CD4-positive, alpha-beta T cell (primary cell): ENCODE measurements at regions of chr6 and their contacts with region 1.

Region 1: GRCh38 chr6:111873178-111874024 is at the start of gene FYN:
- DNase-seq: peak; percentile 97 to 99 (median 98)
- ATAC-seq: peak; percentile 86
- H3K4me3 ChIP-seq: peak within 1 kb of the TSS; percentile 86
- H3K4me3 Mint-ChIP-seq: peak within 1 kb of the TSS; percentile 97
- H3K27ac ChIP-seq: peak within 1 kb of the TSS; percentile 87 to 94
- H3K27ac Mint-ChIP-seq: peak within 1 kb of the TSS; percentile 93
- H3K4me1 ChIP-seq: peaks cover 22% of the 10 kb centered on the region
- H3K4me1 Mint-ChIP-seq: peaks cover 54% of the 10 kb centered on the region
- H3K27me3 ChIP-seq: no peaks in the 10 kb centered on the region
- H3K27me3 Mint-ChIP-seq: no peaks in the 10 kb centered on the region
- CTCF ChIP-seq: no peak
- total RNA-seq, gene FYN: 419 TPM

Region 2: DNA sequence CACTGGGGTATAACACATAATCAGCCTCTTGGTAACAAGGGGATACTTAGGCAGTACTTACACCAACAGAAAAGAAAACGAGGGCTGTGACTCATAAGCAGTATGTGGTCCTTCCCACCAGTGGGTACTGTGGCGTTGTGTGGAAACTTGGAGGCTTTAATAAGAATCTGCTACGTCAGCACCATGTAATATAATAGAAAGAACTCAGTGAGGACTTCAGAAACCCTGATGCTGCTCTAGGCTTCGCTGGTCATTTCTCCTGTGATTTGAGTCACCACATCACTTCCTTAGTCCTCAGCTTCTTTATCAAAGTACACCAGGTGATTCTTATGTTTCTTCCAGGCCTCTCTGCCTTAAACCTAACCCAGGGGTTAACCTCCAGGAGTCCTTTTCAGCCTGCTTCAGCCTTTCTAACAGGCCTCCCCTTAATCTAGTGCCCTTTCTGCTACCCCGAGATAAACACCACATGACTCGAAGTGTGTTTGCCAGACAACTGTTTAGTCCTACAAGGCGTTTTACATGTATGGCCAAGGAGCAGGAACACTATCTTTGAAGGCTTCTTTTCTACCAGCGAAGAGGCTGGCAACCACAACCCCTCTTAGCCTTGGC is 68.7 kb before region 1 on chr6:
- CTCF ChIA-PET with region 1: interaction called, 3 read pairs
- POLR2A ChIA-PET with region 1: interaction called, 7 read pairs
- intact Hi-C with region 1: loop called in 1 of 2 experiments (anchors 1 kb)
- DNase-seq: peak; percentile 38 to 91 (median 54)
- ATAC-seq: peak; percentile 71
- H3K4me3 ChIP-seq: peak overlapping the region; percentile 15
- H3K4me3 Mint-ChIP-seq: peak overlapping the region; percentile 67
- H3K27ac ChIP-seq: peak overlapping the region; percentile 55 to 66
- H3K27ac Mint-ChIP-seq: peak overlapping the region; percentile 91
- H3K4me1 ChIP-seq: peaks cover 77% of the 10 kb centered on the region
- H3K4me1 Mint-ChIP-seq: peaks cover 93% of the 10 kb centered on the region
- H3K27me3 ChIP-seq: no peaks in the 10 kb centered on the region
- H3K27me3 Mint-ChIP-seq: no peaks in the 10 kb centered on the region
- CTCF ChIP-seq: no peak

Region 3: GRCh38 chr6:111850295-111850937 is 23.0 kb before region 1 on chr6:
- CTCF ChIA-PET with region 1: interaction called, 9 read pairs
- POLR2A ChIA-PET with region 1: interaction called, 6 read pairs
- intact Hi-C with region 1: loop called in 1 of 2 experiments (anchors 2 kb)
- DNase-seq: peak in 3 of 14 experiments; percentile 63 to 67 (median 63)
- ATAC-seq: peak; percentile 51
- H3K4me3 ChIP-seq: no peak overlapping the region
- H3K4me3 Mint-ChIP-seq: peak overlapping the region; percentile 78
- H3K27ac ChIP-seq: peak overlapping the region in 1 of 2 donors; percentile 50
- H3K27ac Mint-ChIP-seq: no peak overlapping the region
- H3K4me1 ChIP-seq: peaks cover 72% of the 10 kb centered on the region
- H3K4me1 Mint-ChIP-seq: peaks cover 66% of the 10 kb centered on the region
- H3K27me3 ChIP-seq: no peaks in the 10 kb centered on the region
- H3K27me3 Mint-ChIP-seq: no peaks in the 10 kb centered on the region
- CTCF ChIP-seq: no peak

Region 4: DNA sequence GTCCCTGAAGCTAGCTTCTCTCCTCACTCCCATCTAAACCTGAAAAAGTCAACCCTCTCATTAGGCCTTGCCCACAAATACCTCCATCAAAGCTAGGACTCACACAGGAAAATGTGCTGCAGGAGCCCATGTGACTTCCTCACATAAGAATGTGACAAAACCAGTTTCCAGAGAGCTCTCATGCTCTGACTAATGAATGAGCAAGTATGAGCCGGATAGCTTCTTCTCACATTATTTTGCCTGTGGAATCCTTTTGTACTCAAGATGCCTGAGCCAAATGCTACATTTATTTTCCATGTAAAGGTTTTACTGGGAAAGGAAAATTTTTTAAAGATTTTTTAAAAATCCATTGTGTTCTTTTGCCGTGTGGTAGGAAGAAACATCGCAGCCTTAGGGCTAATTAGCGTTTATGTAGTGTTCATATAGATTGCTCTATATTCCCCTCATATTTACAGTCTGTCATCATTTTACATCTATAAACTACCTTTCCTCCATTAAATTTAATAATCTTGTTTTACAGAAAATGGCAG is 111.9 kb after region 1 on chr6:
- CTCF ChIA-PET with region 1: interaction called, 5 read pairs
- POLR2A ChIA-PET with region 1: interaction called, 14 read pairs
- intact Hi-C with region 1: loop called in 1 of 2 experiments (anchors 1 kb)
- DNase-seq: peak in 7 of 14 experiments; percentile 15 to 79 (median 58)
- ATAC-seq: peak; percentile 68
- H3K4me3 ChIP-seq: no peak overlapping the region
- H3K4me3 Mint-ChIP-seq: peak overlapping the region; percentile 45
- H3K27ac ChIP-seq: peak overlapping the region in 1 of 2 donors; percentile 4
- H3K27ac Mint-ChIP-seq: peak overlapping the region; percentile 77
- H3K4me1 ChIP-seq: peaks cover 63% of the 10 kb centered on the region
- H3K4me1 Mint-ChIP-seq: peaks cover 95% of the 10 kb centered on the region
- H3K27me3 ChIP-seq: no peaks in the 10 kb centered on the region
- H3K27me3 Mint-ChIP-seq: no peaks in the 10 kb centered on the region
- CTCF ChIP-seq: no peak